Right ventricle myocardium superior (tissue), 1 donor: ENCODE measurements at regions of chr12 and their contacts with region 1.

Region 1: DNA sequence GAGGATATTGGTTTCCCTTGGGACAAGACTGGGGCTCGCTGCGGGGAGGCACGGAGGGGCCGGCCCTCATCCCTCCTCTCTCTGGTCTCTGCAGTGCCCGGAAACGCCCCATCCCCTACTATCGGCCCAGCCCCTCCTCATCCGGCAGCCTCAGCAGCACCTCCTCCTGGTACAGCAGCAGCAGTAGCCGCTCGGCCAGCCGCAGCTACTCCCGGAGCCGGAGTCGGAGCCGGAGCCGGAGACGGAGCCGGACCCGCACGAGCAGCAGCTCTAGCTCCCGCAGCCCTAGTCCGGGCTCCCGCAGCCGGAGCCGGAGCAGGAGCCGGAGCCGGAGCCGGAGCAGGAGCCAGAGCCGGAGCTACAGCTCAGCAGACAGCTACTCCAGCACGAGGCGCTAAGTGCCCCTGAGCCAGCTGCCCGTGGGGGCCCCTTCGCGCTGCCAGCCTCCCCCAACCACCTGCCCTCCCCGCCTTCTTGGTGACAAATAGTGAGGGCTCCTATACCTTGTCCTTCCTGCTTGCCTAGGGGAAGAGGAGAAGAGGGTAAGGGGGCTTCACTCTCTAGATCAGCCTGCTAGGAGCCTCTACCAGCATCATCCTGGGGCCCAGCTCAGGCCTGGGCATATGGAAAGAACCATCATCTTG is 22.2 kb upstream of the HSPB8 start:
- DNase-seq: peak; percentile 51
- ATAC-seq: no peak

Region 2: DNA sequence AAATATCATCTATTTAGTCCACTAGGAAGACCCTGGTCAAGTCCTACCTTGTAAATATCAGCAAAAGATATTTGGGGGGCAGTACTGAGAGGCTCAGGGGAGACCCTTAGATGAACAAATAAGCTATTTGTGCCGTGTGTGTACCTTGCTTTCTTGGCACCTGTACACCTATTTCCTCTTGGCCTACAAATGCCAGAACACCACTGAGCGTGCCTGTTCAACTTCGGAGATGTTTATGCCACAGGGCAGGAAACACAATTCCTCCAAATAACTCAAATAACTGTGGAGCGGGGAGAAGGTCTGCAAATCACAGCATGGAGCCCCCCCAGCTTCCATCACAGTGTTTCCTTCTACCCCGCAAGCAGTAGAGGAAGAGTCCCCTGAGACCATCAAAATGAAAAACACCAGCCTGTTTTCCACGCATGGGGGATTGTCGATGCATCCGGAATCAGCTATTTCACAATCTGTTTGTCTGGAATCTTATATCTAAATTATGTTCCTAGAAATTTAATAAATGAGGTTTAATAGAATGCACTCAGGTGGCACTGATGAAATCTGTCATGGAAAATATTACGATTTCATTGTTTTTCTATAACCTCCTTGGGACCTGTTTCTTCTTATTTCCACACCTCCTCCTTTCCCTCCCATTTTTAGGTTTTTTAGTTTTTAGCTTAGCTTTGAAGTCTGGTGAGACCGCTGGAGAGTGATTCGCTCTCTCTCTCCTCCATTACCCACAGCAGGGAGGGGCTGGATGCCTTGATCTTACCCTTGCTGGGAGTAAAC is 429.1 kb before region 1 on chr12:
- intact Hi-C with region 1: no loop called
- DNase-seq: no peak
- ATAC-seq: no peak

Region 3: GRCh38 chr12:119176267-119176849 is 19.8 kb after region 1 on chr12:
- intact Hi-C with region 1: loop called (anchors 2 kb)
- DNase-seq: peak; percentile 94
- ATAC-seq: peak; percentile 63

Region 4: GRCh38 chr12:119375075-119375882 is 218.8 kb after region 1 on chr12:
- intact Hi-C with region 1: no loop called
- DNase-seq: no peak
- ATAC-seq: no peak